ENCODE measurements at regions of chr14 and their contacts with region 1.

Region 1: DNA sequence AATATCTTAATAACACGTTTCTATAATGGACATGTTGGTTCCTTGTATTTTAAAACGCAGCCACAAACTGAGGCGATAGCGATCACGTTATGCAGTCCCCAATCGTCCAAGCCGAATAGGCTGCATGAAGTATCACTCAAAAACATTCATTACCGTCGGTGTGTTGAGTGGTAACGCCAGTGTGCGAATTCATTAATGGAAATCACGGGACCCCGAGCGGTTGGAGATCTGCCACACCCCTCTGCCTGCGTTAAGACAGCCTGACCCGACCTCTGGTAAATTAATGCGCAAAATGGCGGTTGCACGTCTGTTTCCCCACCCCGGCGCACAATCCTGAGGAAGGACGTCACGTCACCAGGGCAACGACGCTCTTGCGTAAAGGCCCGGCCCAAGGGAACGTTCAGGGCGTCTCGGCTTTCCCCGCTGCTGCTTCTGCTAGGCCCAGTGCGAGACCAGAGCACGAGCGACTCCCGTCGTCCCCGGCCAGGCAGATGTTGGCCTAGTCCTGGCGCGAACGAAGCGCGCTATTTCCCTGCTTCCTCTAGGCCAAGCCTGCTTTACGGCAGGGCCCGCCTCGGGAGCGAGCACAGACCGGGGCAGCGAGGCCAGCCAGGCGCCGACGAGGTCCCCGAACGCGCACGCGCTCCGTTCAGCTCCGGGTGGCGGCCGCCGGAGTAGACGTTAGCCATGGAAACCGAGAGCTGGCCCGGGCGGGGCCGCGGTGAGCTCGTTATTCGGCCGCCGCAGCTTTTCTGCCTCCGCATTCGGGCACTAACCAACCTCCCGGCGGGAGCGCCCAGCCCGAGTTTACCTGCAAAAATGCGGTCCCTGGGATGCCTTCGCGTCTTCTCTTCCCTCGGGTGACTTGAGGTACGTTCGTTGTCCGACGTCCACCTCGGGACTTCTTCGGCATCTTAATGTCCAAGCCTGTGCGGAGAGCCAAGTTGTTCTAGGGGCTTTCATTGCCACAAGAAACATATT is at the start of gene PCNX4:
- DNase-seq: peak; percentile 95
- H3K4me3 Mint-ChIP-seq: peak within 1 kb of the TSS; percentile 95
- H3K27ac Mint-ChIP-seq: peak within 1 kb of the TSS; percentile 91
- H3K4me1 Mint-ChIP-seq: peaks cover 30% of the 10 kb centered on the region
- H3K27me3 Mint-ChIP-seq: no peaks in the 10 kb centered on the region
- total RNA-seq, gene PCNX4: 26.3 to 26.9 TPM

Region 2: GRCh38 chr14:60111732-60112131 is 19.9 kb after region 1 on chr14:
- CTCF ChIA-PET with region 1: no interaction called
- POLR2A ChIA-PET with region 1: no interaction called
- intact Hi-C with region 1: loop called (anchors 2 kb)
- DNase-seq: no peak
- H3K4me3 Mint-ChIP-seq: no peak overlapping the region
- H3K27ac Mint-ChIP-seq: no peak overlapping the region
- H3K4me1 Mint-ChIP-seq: peaks cover 7% of the 10 kb centered on the region
- H3K27me3 Mint-ChIP-seq: no peaks in the 10 kb centered on the region

Region 3: DNA sequence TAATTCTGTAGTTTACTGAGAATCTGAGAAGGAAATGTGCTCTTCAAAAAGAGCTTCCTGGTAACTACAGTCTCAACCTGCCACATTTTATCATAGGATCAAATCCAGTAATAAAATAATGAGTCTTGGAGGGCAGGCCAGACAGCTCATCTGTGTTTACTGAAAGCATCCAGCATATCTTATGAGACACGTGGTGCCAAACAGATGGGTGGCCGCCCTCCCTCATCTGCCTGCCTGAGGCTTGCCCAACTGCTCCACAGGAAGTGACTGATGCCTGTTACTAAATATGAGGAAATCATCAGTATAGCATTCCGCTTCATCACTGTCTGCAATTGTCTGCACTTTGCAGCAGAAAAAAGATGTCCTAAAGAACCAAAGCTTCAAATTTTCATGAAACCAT is 59.9 kb after region 1 on chr14:
- CTCF ChIA-PET with region 1: interaction called, 3 read pairs
- POLR2A ChIA-PET with region 1: interaction called, 5 read pairs
- intact Hi-C with region 1: loop called (anchors 1 kb)
- DNase-seq: peak; percentile 84
- H3K4me3 Mint-ChIP-seq: no peak overlapping the region
- H3K27ac Mint-ChIP-seq: peak overlapping the region; percentile 83
- H3K4me1 Mint-ChIP-seq: peaks cover 37% of the 10 kb centered on the region
- H3K27me3 Mint-ChIP-seq: no peaks in the 10 kb centered on the region

Region 4: GRCh38 chr14:60164712-60165546 is 73.1 kb after region 1 on chr14 and contains the start of gene DHRS7:
- CTCF ChIA-PET with region 1: interaction called, 10 read pairs
- POLR2A ChIA-PET with region 1: interaction called, 6 read pairs
- intact Hi-C with region 1: loop called (anchors 1 kb)
- DNase-seq: peak; percentile 79
- H3K4me3 Mint-ChIP-seq: peak within 1 kb of the TSS; percentile 94
- H3K27ac Mint-ChIP-seq: peak within 1 kb of the TSS; percentile 97
- H3K4me1 Mint-ChIP-seq: peaks cover 37% of the 10 kb centered on the region
- H3K27me3 Mint-ChIP-seq: no peaks in the 10 kb centered on the region
- total RNA-seq, gene DHRS7: 70.3 to 74.7 TPM

Region 5: GRCh38 chr14:60195179-60195810 is 103.5 kb after region 1 on chr14:
- CTCF ChIA-PET with region 1: no interaction called
- POLR2A ChIA-PET with region 1: no interaction called
- intact Hi-C with region 1: no loop called
- DNase-seq: no peak
- H3K4me3 Mint-ChIP-seq: no peak overlapping the region
- H3K27ac Mint-ChIP-seq: no peak overlapping the region
- H3K4me1 Mint-ChIP-seq: peaks cover 8% of the 10 kb centered on the region
- H3K27me3 Mint-ChIP-seq: peaks cover 9% of the 10 kb centered on the region